Right lobe of liver (tissue), 6 donors: ENCODE measurements at regions of chr1 and their contacts with region 1.

Region 1: GRCh38 chr1:52002038-52002917 is 11.8 kb upstream of the RAB3B start:
- DNase-seq: peak in 1 of 3 donors; percentile 56
- ATAC-seq: peak; percentile 99 to 100 (median 100)
- H3K4me3 ChIP-seq: no peak overlapping the region
- H3K27ac ChIP-seq: no peak overlapping the region
- H3K4me1 ChIP-seq: peaks cover 0 to 2% (median 0%) of the 10 kb centered on the region in 4 donors
- H3K27me3 ChIP-seq: no peaks in the 10 kb centered on the region
- CTCF ChIP-seq: peak; percentile 92 to 98 (median 95)
- POLR2A ChIP-seq: no peak

Region 2: GRCh38 chr1:51897699-51898031 is 104.6 kb before region 1 on chr1:
- intact Hi-C with region 1: loop called (anchors 5 to 10 kb)
- DNase-seq: no peak
- ATAC-seq: no peak
- H3K4me3 ChIP-seq: no peak overlapping the region
- H3K27ac ChIP-seq: no peak overlapping the region
- H3K4me1 ChIP-seq: no peaks in the 10 kb centered on the region
- H3K27me3 ChIP-seq: peaks cover 0 to 5% of the 10 kb centered on the region in 2 donors
- CTCF ChIP-seq: no peak
- POLR2A ChIP-seq: no peak

Region 3: DNA sequence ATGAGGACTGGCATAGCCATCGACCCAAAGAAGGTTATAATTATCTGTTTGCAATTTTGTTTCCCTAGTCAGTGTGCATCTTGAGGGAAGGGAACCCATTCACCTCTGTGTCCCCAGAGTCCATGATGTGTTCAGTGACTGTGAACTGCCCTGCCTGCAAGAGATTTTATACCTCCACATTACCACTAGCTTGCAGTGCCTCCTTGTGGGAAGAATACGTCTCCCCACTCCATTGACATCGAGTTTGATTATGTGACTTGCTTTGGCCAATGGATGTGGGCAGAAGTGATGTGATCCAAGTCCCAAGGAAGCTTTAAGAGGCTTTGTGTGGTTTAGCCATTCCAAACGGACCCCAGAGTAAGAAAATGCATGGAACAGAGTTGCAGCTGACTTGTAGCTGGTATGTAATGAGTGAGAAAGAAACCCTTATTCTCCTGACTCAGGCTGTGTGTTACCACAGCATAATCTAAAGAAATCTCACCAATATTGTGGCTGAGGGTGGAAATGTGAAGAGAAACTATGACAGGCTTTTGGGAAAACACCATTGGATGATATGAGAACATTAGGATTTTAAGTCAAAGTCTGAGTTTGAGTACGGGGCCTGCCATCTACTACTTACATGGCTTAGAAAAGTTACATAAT is 76.0 kb before region 1 on chr1:
- intact Hi-C with region 1: no loop called
- DNase-seq: no peak
- ATAC-seq: no peak
- H3K4me3 ChIP-seq: no peak overlapping the region
- H3K27ac ChIP-seq: no peak overlapping the region
- H3K4me1 ChIP-seq: no peaks in the 10 kb centered on the region
- H3K27me3 ChIP-seq: no peaks in the 10 kb centered on the region
- CTCF ChIP-seq: no peak
- POLR2A ChIP-seq: no peak